AG04449 (cell line): ENCODE measurements at regions of chr6 and their contacts with region 1.

Region 1: DNA sequence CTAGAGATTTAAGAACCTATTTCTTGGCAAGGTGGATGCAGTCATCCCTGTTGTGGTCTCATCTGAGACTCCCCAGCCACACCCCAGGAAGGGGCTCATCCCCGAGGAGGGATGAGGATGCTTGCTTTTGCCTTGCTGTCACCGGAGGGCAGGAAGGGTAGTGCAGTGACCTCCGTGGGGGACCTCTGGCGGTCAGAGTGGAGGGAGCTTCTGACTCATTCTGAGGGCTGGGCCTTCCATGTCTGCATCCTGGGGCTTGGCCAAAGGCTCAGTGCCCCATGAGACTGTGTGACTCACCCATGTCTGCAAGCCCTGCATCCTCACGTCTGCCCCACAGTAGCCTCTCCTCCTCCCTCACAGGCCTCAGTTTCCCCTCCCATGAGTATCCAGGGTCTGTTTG is 38.7 kb downstream of the UQCC2 start:
- DNase-seq: peak; percentile 78
- H3K4me3 ChIP-seq: no peak overlapping the region
- CTCF ChIP-seq: peak; percentile 71

Region 2: DNA sequence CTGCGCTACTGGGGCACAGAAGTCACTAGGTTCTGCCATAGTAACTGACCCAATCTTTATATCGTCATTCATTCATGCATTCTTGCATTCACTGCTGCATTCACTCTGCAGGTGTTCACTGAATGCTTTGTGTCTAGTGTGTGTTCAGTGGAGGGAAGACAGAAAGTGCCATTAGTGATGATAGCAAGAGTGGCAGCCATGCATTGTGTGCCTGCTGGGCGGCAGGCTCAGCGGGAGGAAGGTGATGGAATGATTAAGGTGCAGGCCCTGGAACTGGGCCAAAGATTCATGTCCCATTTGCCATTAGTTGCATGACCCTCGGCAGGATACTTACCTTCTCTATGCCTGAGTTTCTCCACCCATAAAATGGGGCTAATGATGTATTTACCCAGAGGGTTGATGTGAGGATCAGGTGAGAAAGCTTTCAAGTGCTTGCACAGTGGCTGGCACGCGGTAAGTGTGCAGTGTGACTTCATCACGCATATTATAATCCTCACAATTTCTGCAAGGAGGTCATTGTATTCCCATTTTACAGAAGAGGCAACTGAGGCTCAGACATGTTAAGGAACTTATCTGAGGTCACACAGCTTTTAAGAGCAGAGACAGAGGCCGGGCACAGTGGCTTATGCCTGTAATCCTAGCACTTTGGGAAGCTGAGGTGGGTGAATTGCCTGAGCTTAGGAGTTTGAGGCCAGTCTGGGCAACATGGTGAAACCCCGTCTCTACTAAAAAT is 11.5 kb before region 1 on chr6:
- CTCF ChIA-PET with region 1: interaction called, 25 read pairs
- POLR2A ChIA-PET with region 1: interaction called, 4 read pairs
- DNase-seq: no peak
- H3K4me3 ChIP-seq: no peak overlapping the region
- CTCF ChIP-seq: no peak

Region 3: DNA sequence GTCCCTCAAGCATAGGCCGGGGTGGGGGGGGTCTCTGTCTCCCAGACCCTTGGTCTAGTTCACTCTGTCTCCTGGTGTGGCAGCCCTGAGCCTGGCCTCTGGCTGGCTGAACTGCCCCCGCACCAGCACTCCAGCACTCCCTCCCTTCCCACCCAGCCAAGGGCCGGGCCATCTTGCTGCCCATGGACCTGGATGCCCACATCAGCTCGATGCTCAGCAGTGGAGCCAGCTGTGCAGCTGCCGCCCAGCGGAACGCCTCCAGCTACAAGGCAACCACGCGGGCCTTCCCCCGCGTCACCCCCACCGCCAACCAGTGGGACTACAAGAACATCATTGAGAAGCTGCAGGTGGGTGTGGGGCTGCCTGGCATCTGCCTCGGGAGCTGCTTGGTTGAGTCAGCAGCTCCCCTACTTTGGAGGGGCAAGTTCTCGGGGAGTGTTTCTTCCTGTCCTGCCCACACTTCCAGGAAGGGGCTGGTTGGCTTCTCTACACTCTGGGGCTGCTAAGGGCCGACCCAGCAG is 10.3 kb after region 1 on chr6:
- CTCF ChIA-PET with region 1: interaction called, 11 read pairs
- POLR2A ChIA-PET with region 1: no interaction called
- DNase-seq: no peak
- H3K4me3 ChIP-seq: no peak overlapping the region
- CTCF ChIP-seq: no peak

Region 4: GRCh38 chr6:33717934-33718455 is 45.2 kb after region 1 on chr6:
- CTCF ChIA-PET with region 1: no interaction called
- POLR2A ChIA-PET with region 1: no interaction called
- DNase-seq: no peak
- H3K4me3 ChIP-seq: no peak overlapping the region
- CTCF ChIP-seq: no peak

Region 5: DNA sequence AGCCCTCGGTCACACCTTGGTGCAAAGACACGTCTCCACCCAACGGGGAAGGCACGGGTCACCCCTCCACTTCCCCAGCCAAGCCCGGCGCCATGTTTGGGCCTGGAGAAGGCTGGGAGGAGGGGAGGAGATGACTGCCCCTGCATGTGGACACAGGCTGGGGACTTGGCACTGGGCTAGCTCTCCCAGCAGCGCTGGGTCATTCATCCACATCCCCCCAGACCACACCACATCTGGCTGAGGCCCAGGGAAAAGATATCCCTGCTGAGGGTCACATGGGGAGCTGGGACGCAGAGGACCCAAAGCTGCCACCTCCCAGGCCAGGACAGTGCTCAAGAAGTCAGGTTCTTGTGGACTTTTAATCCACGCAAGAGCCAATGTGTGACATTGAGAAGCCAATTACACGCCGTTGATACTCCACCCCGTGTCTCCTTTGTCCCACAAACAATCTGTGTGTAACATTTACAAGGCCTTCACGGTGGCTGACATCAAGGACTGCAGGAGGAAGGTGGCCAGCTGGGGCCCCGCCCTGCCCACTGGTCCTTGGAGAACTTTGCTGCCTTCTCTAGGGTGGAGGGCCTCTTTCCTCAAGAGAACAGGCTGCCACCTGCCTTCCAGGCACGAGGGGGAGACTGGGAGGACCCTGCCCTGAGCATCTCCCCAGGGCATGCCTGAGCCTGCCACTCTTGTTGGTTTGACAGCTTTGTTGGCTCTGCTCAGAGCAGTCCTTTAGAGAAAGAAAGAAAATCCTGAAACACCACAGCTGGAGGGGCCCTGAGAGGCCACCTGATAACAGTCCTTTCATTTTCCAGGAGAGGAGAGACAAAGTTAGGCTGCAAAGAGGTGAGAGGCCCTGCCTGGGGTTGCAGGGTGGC is 79.2 kb after region 1 on chr6:
- CTCF ChIA-PET with region 1: no interaction called
- POLR2A ChIA-PET with region 1: no interaction called
- DNase-seq: no peak
- H3K4me3 ChIP-seq: no peak overlapping the region
- CTCF ChIP-seq: no peak